B cell (primary cell): ENCODE measurements at regions of chr14 and their contacts with region 1.

Region 1: DNA sequence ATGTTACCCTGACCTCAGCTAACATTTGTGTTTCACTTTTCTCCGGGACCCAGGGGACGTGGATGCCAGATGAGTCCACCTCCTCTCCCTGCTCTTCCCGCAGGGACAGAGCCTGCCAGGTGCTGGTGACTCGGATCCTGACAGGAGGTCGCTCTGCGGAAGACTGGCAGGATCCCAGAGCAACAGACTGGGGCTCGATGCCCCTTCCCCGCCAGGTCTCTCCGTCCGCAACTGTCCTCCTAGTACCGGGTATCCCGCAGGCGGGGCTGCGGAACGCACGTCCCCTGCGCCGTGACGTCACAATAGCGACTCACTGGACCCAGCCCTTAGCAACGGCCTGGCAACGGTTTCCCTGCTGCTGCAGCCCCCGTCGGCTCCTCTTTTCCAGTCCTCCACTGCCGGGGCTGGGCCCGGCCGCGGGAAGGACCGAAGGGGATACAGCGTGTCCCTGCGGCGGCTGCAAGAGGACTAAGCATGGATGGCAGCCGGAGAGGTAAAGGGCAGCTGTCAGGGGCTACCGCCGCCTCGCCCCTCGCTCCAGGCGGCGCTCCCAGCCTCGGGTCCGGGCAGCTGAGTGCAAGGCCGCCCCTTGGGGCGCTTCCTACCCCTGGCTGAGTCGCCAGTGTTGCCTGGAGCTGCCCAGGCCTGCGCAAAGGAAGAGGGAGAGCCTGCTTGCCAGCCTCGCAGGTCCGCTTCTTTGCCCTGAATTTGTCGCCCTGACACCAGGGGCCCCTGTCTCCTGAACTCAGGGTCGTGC is at the start of gene SPATA7:
- DNase-seq: peak; percentile 82
- ATAC-seq: peak; percentile 92
- H3K4me3 ChIP-seq: peak within 1 kb of the TSS; percentile 81 to 95 (median 93)
- H3K4me3 Mint-ChIP-seq: peak within 1 kb of the TSS; percentile 98
- H3K27ac ChIP-seq: peak within 1 kb of the TSS; percentile 38 to 67
- H3K27ac Mint-ChIP-seq: peak within 1 kb of the TSS; percentile 78
- H3K4me1 ChIP-seq: peaks cover 6 to 13% of the 10 kb centered on the region in 2 donors
- H3K4me1 Mint-ChIP-seq: peaks cover 20% of the 10 kb centered on the region
- H3K27me3 ChIP-seq: peaks cover 0 to 4% (median 0%) of the 10 kb centered on the region in 4 experiments
- H3K27me3 Mint-ChIP-seq: peaks cover 3% of the 10 kb centered on the region
- CTCF ChIP-seq: no peak
- total RNA-seq, gene SPATA7: 3.2 and 3.3 TPM in 2 replicates

Region 2: GRCh38 chr14:88426271-88426670 is 40.7 kb after region 1 on chr14:
- CTCF ChIA-PET with region 1: no interaction called
- POLR2A ChIA-PET with region 1: no interaction called
- intact Hi-C with region 1: no loop called
- DNase-seq: no peak
- ATAC-seq: no peak
- H3K4me3 ChIP-seq: no peak overlapping the region
- H3K4me3 Mint-ChIP-seq: no peak overlapping the region
- H3K27ac ChIP-seq: no peak overlapping the region
- H3K27ac Mint-ChIP-seq: no peak overlapping the region
- H3K4me1 ChIP-seq: no peaks in the 10 kb centered on the region
- H3K4me1 Mint-ChIP-seq: no peaks in the 10 kb centered on the region
- H3K27me3 ChIP-seq: no peaks in the 10 kb centered on the region
- H3K27me3 Mint-ChIP-seq: no peaks in the 10 kb centered on the region
- CTCF ChIP-seq: no peak

Region 3: DNA sequence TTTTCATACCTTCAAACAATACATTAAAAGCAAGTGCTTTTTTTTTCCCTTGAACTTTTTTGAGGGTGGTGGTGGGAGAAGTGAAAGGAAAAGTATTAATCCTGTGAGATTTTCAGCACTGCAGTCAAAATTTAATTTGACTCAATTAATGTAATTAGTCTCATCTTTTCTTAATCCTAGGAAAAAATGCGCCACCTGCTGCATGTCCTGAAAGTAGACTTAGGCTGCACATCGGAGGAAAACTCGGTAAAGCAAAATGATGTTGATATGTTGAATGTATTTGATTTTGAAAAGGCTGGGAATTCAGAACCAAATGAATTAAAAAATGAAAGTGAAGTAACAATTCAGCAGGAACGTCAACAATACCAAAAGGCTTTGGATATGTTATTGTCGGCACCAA is 52.1 kb after region 1 on chr14:
- CTCF ChIA-PET with region 1: no interaction called
- POLR2A ChIA-PET with region 1: no interaction called
- intact Hi-C with region 1: loop called (anchors 2 kb)
- DNase-seq: no peak
- ATAC-seq: no peak
- H3K4me3 ChIP-seq: no peak overlapping the region
- H3K4me3 Mint-ChIP-seq: no peak overlapping the region
- H3K27ac ChIP-seq: no peak overlapping the region
- H3K27ac Mint-ChIP-seq: no peak overlapping the region
- H3K4me1 ChIP-seq: no peaks in the 10 kb centered on the region
- H3K4me1 Mint-ChIP-seq: no peaks in the 10 kb centered on the region
- H3K27me3 ChIP-seq: no peaks in the 10 kb centered on the region
- H3K27me3 Mint-ChIP-seq: no peaks in the 10 kb centered on the region
- CTCF ChIP-seq: no peak